Endothelial cell of umbilical vein (primary cell): ENCODE measurements at regions of chr13 and their contacts with region 1.

Region 1: DNA sequence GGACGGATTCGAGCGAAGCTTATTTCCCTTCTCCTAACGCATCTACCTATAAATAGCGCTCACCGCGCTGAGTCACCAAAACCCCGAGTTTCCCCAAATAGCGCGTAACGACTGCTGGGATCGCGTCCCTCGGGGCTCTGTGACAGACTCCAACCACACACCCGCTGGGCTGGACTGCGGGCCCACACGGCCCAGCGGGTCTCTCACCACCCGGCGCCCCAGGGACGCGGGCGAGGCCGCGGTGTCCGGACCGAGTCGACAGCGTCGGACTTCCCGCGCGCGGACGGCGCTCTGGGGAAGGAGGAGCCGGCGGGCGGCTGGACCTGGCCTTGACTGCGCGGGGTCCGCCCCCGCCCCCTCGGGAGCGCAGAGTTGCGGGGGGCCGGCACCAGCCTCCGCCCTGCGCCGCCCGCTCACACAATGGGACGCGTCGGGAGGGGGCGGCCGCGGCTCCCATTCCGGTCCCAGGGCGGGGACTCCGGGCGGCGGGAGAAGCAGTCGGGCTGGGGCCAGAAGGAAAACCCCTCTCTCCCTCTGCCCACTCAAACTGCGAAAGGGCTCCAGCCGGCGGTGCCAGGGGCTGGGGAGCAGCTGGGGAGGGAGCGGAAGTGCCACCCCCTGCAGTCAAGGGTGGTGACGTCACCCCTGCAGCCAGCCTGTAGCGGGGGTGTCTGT is 108.8 kb downstream of the KCNRG start:
- DNase-seq: peak; percentile 95
- H3K4me3 ChIP-seq: peak overlapping the region; percentile 68 to 91 (median 75)
- H3K27ac ChIP-seq: peak overlapping the region; percentile 93
- H3K4me1 ChIP-seq: peaks cover 8% of the 10 kb centered on the region
- H3K27me3 ChIP-seq: peaks cover 4 to 7% of the 10 kb centered on the region in 2 experiments
- CTCF ChIP-seq: no peak
- POLR2A ChIP-seq: peak; percentile 77

Region 2: DNA sequence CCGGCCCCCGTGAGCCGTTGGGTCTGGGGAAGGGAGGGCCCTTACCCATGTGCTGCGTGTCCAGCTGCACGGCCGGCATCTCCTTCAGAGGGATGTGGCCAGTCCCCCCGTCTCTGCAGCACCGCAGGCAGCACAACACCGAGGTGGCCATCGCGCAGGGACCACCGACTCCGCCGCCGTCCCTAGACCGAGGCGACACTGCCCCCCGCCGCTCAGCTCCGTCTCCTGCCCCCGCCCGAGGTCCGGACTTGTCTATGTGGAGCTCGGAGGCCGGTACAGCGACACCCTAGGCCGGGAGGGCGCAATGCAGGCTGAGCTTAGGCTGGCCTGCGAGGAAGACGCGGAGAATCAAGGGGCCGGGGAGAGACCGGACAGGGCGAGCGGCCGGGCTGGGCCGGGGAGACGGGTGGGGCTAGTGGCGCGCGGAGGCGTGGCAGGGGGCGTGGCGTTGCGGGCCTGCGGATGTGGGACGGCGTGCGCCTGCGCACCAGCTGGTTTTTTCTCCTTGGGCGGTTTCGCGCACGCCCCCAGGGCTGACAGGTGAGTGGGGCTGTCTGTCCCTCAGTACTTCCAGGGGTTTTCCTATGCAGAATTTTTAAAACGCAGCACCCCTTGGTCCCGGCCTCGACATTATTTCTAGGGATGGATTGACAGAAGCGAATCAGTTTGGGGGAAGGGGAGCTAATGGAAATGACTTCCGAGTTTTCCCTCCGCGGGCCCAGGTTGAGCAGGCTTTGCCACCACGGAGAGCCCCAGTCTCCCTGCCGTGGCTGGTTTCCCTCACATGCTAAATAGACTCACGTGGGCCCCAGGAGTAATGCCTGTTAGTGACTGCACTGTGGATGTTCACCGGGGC is 187.7 kb before region 1 on chr13 and contains the start of gene SPRYD7:
- CTCF ChIA-PET with region 1: interaction called, 3 read pairs
- POLR2A ChIA-PET with region 1: no interaction called
- dilution Hi-C with region 1: no loop called
- intact Hi-C with region 1: loop called (anchors 2 kb)
- DNase-seq: peak; percentile 99
- H3K4me3 ChIP-seq: peak within 1 kb of the TSS; percentile 69 to 82 (median 79)
- H3K27ac ChIP-seq: peak within 1 kb of the TSS; percentile 21
- H3K4me1 ChIP-seq: peaks cover 8% of the 10 kb centered on the region
- H3K27me3 ChIP-seq: no peaks in the 10 kb centered on the region
- CTCF ChIP-seq: peak; percentile 90 to 95
- POLR2A ChIP-seq: peak; percentile 70
- total RNA-seq, gene SPRYD7: 7.0 and 7.5 TPM in 2 replicates

Region 3: GRCh38 chr13:49996951-49997895 is 126.8 kb before region 1 on chr13 and contains the start of gene TRIM13:
- CTCF ChIA-PET with region 1: interaction called, 18 read pairs
- POLR2A ChIA-PET with region 1: interaction called, 5 read pairs
- dilution Hi-C with region 1: no loop called
- intact Hi-C with region 1: loop called (anchors 1 kb)
- DNase-seq: peak; percentile 93
- H3K4me3 ChIP-seq: peak within 1 kb of the TSS; percentile 84 to 98 (median 95)
- H3K27ac ChIP-seq: peak within 1 kb of the TSS; percentile 93
- H3K4me1 ChIP-seq: peaks cover 35% of the 10 kb centered on the region
- H3K27me3 ChIP-seq: no peaks in the 10 kb centered on the region
- CTCF ChIP-seq: peak; percentile 80 to 81
- POLR2A ChIP-seq: peak; percentile 84
- total RNA-seq, gene TRIM13: 25.9 and 28.2 TPM in 2 replicates

Region 4: GRCh38 chr13:50448535-50448998 is 324.6 kb after region 1 on chr13:
- CTCF ChIA-PET with region 1: no interaction called
- POLR2A ChIA-PET with region 1: interaction called, 9 read pairs
- dilution Hi-C with region 1: no loop called
- intact Hi-C with region 1: loop called (anchors 2 kb)
- DNase-seq: peak; percentile 97
- H3K4me3 ChIP-seq: no peak overlapping the region
- H3K27ac ChIP-seq: peak overlapping the region; percentile 94
- H3K4me1 ChIP-seq: peaks cover 22% of the 10 kb centered on the region
- H3K27me3 ChIP-seq: no peaks in the 10 kb centered on the region
- CTCF ChIP-seq: no peak
- POLR2A ChIP-seq: peak; percentile 65

Region 5: DNA sequence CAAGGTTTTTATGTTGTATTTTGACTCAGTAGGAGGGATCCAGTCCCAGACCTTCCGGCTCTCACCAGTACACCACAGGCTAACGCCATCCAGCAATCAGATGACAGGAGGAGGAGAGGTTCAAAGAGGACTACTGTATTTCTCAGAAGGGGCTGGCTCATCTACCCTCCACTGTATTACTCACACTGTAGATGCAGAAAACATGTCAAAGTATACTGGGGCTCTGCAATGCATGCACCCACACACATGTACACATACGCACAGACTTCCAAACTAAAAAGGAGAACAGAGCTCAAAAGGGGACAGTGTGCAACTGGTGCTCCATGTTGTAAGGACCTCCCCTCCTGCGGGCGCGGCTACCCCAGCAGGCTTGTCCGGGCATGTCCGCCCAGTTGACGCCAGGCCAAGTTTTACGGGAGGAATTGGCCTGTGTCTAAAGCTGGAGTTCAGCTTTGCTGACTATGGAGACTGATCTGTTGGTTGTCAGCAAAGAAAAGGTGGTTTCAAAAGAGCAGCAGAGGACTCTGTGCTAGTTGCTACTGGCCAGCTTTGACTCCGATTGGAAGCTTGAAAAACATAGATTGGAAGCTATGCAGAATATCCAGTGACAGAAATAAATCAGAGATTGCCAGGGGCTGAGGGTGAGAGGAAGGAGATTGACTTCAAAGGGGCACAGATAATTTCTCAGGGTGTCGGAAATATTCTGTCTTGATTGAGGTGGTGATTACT is 405.3 kb after region 1 on chr13:
- CTCF ChIA-PET with region 1: no interaction called
- POLR2A ChIA-PET with region 1: no interaction called
- dilution Hi-C with region 1: no loop called
- intact Hi-C with region 1: loop called (anchors 2 kb)
- DNase-seq: peak; percentile 81
- H3K4me3 ChIP-seq: no peak overlapping the region
- H3K27ac ChIP-seq: peak overlapping the region; percentile 39
- H3K4me1 ChIP-seq: peaks cover 8% of the 10 kb centered on the region
- H3K27me3 ChIP-seq: no peaks in the 10 kb centered on the region
- CTCF ChIP-seq: no peak
- POLR2A ChIP-seq: no peak

Region 6: DNA sequence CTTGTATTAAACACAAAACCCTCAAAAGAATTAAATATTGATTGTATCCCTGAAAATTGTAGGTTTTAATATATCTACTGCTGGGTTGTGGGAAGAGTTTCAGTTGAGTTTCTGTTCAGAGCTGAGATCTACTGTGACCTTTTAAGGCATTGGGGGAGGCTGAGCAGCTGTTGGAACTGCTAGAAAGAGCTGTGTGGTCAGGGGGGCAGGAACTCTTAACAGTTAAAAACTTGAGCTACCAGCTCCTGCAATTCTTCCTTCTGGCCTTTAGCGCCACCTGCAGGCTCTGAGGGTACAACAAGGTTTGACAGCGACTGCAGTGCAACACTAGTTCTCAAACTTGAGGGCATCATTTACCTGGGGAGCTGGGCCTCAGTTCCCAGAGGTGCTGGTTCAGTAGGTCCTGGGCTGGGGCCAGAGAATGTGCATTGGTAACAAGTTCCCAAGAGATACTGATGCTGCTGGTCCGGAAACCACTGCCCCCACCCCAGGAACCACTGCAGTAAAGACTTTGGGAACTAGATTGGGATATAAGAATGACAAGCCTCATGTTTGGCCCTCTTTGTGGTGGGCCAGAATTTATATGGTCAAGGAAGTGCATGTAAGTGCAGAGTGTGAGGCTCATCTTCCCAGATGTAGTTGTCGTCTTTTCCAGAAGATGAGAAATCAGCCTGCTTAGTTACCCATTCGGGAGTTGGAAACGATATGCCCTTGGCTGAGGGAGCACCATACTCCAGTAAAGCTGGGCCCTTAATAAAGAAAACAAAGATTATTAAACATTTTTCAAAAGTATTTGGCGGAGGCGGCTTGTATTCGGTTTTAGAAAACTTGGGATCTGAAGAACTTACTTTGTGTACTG is 788.2 kb after region 1 on chr13:
- CTCF ChIA-PET with region 1: interaction called, 6 read pairs
- POLR2A ChIA-PET with region 1: no interaction called
- dilution Hi-C with region 1: no loop called
- intact Hi-C with region 1: loop called (anchors 2 kb)
- DNase-seq: peak; percentile 78
- H3K4me3 ChIP-seq: no peak overlapping the region
- H3K27ac ChIP-seq: no peak overlapping the region
- H3K4me1 ChIP-seq: peaks cover 29% of the 10 kb centered on the region
- H3K27me3 ChIP-seq: no peaks in the 10 kb centered on the region
- CTCF ChIP-seq: peak; percentile 83 to 86
- POLR2A ChIP-seq: no peak